ENCODE measurements at regions of chr14 and their contacts with region 1.

Region 1: DNA sequence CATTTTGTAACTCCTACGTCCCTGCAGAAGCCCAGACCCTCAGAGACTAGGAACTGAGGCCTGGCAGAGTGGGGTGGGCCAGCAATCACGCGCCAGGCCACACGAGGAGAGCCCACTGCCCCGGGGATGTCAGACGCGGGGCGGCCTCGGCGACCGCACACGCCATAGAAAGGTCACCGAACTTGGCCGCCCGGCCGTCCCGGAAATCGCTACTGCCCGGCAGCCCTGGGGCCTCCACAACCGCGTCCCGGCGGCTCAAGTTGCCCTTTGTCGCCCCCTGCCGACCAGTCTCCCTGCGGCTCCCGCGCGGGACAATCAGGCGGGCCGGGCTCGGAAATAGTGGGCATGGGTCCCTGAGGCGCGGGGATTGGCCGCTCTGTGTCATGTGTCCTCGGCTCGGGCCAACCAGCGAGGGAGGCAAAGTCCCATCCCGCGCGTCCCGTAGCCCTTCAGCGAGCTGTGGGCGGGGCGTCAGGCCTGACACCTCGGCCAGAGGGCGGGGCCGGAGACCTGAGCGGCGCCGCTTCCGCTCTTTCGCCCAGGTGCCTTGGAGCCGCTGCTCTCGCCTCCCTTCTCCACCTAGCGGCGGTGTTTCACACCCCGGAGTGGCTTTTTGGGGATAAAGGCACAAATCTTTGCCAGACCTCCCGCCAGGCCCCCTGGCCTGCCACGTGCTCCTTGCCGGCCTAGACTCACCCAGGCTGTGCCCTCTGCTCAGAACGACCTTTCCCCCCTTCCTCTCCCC is 33.4 kb upstream of the DEGS2 start:
- DNase-seq: peak; percentile 100
- H3K4me3 ChIP-seq: peak overlapping the region in 3 of 4 donors; percentile 25 to 52 (median 27)
- H3K27ac ChIP-seq: peak overlapping the region; percentile 85 to 95 (median 89)
- H3K4me1 ChIP-seq: peaks cover 5 to 30% (median 22%) of the 10 kb centered on the region in 4 donors
- H3K27me3 ChIP-seq: no peaks in the 10 kb centered on the region
- CTCF ChIP-seq: peak; percentile 75 to 98 (median 89)
- EP300 ChIP-seq: no peak
- POLR2A ChIP-seq: peak; percentile 33

Region 2: DNA sequence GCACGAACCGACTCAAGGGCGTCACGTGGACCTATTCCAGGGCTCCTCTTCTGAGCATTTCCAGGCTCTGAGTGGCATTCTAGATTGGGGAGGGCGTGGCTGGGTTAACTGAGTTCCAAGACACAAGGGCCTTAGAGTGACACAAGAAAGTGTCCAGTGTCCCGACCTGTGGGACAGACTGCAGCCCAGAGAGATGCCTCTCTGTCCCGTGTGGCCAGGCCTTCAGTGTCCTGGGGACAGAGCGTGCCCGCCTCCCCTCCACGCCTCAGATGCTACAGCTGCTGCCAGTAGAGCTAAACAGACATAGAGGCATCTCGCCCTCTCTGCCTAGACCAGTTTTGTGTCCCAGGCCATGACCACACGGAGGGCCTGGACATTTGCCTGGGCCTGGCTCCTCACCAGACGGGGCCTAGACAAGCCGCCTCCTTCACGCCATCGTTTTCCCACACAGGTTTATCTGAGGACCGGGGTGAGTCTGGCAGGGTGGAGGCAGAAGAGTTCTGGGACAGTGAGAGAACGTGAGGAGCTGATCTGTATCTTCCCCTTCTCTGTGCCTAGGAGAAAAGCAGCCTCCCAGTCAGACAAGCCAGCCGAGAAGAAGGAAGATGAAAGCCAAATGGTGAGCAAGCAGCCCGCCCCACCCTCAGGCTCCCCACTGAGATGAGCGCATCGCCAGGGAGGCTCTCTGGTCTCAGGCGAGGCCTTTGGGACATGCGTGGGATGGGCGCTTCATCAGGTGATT is 60.5 kb before region 1 on chr14:
- in situ Hi-C with region 1: no loop called
- intact Hi-C with region 1: loop called (anchors 2 kb)
- DNase-seq: no peak
- H3K4me3 ChIP-seq: no peak overlapping the region
- H3K27ac ChIP-seq: no peak overlapping the region
- H3K4me1 ChIP-seq: peaks cover 0 to 13% (median 3%) of the 10 kb centered on the region in 4 donors
- H3K27me3 ChIP-seq: no peaks in the 10 kb centered on the region
- CTCF ChIP-seq: no peak
- EP300 ChIP-seq: no peak
- POLR2A ChIP-seq: no peak

Region 3: DNA sequence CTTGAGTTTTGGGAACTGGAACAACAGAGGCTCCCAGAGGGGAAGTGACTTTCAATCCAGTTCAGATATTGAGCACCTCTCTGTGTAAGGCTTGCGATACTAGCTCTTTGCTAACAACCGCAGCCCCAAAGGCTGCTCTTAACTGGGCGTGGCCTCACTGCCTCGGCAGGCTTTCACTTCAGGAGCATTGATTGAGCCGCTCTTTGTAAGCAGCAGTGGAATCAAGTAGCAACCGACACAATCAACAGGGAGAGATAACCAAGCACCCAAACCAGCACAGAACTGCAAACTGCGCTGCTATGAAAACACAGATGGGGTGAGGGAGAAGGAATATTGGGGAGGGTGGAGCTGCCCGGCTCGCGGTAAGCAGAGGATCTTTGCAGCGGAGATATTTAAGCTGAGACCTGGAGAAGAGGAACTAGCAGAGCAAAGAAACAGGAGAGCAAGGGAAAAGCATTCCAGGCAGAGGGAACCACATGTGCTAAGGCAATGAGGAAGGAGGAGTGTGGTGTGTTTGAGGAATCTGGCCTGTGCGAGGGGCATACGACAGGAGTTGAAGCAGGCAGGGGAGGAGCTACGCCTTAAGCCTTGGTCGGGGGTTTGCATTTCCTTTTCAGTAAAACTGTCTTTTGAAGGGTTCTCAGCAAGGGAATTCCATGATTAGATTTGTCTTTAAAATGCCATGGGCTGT is 28.8 kb after region 1 on chr14:
- in situ Hi-C with region 1: no loop called
- intact Hi-C with region 1: no loop called
- DNase-seq: peak; percentile 74
- H3K4me3 ChIP-seq: peak overlapping the region; percentile 6 to 48 (median 40)
- H3K27ac ChIP-seq: peak overlapping the region; percentile 71 to 86 (median 78)
- H3K4me1 ChIP-seq: peaks cover 6 to 27% (median 22%) of the 10 kb centered on the region in 4 donors
- H3K27me3 ChIP-seq: no peaks in the 10 kb centered on the region
- CTCF ChIP-seq: no peak
- EP300 ChIP-seq: no peak
- POLR2A ChIP-seq: no peak